ENCODE measurements at regions of chr10 and their contacts with region 1.

Region 1: DNA sequence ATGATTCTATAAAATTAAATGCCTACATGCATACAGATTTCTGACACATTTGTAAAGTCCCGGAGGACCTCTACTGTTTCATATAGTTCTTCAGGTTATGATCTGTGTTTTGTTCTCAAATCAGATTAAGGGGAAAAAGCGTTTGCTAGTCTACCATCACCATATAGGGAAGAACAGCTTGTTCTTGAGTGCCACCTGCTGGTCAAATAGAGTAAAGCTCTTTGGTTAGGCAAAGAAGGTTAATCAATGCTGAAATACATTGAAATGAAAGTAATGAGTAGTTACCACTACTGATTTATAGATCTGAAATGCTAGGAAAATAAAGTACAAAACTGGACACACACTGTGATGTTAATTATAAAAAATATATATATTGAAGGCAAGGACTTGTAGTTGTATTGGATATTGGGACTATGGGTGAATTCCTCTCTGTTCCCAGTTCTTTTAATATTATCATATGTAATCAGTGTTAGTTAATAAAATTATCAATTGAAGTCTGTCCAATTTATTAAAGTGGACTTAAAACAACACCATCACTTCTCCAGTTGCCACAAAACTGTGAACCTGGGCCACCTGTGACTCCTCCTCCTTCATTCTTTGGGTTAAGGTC is 72.6 kb upstream of the PDLIM1 start:
- DNase-seq: no peak
- ATAC-seq: peak; percentile 61
- H3K4me3 ChIP-seq: no peak overlapping the region
- H3K27ac ChIP-seq: peak overlapping the region in 1 of 2 donors; percentile 49
- H3K4me1 ChIP-seq: peaks cover 0 to 8% of the 10 kb centered on the region in 2 donors
- H3K27me3 ChIP-seq: no peaks in the 10 kb centered on the region

Region 2: GRCh38 chr10:95183271-95184230 is 179.9 kb before region 1 on chr10:
- intact Hi-C with region 1: loop called in 1 of 2 experiments (anchors 5 kb)
- DNase-seq: peak; percentile 90 to 97
- ATAC-seq: peak; percentile 97
- H3K4me3 ChIP-seq: peak overlapping the region; percentile 39 to 76
- H3K27ac ChIP-seq: peak overlapping the region in 1 of 2 donors; percentile 72
- H3K4me1 ChIP-seq: no peaks in the 10 kb centered on the region
- H3K27me3 ChIP-seq: no peaks in the 10 kb centered on the region

Region 3: GRCh38 chr10:95308389-95309302 is 54.8 kb before region 1 on chr10:
- intact Hi-C with region 1: no loop called
- DNase-seq: peak; percentile 92 to 94
- ATAC-seq: peak; percentile 77
- H3K4me3 ChIP-seq: no peak overlapping the region
- H3K27ac ChIP-seq: peak overlapping the region; percentile 5 to 92
- H3K4me1 ChIP-seq: peaks cover 3 to 10% of the 10 kb centered on the region in 2 donors
- H3K27me3 ChIP-seq: no peaks in the 10 kb centered on the region